BJ (cell line): ENCODE measurements at regions of chr5 and their contacts with region 1.

Region 1: GRCh38 chr5:115098041-115098702 is 71.5 kb downstream of the TRIM36 start:
- DNase-seq: peak; percentile 6
- H3K4me3 ChIP-seq: no peak overlapping the region
- H3K27me3 ChIP-seq: peaks cover 2% of the 10 kb centered on the region; the same call in 1 of the 2 replicates
- CTCF ChIP-seq: peak; percentile 75

Region 2: GRCh38 chr5:114782869-114783268 is 315.3 kb before region 1 on chr5:
- CTCF ChIA-PET with region 1: no interaction called
- POLR2A ChIA-PET with region 1: no interaction called
- DNase-seq: no peak
- H3K4me3 ChIP-seq: no peak overlapping the region
- H3K27me3 ChIP-seq: no peaks in the 10 kb centered on the region
- CTCF ChIP-seq: no peak

Region 3: GRCh38 chr5:115246361-115246991 is 148.3 kb after region 1 on chr5:
- CTCF ChIA-PET with region 1: interaction called, 12 read pairs
- POLR2A ChIA-PET with region 1: no interaction called
- DNase-seq: no peak
- H3K4me3 ChIP-seq: no peak overlapping the region
- H3K27me3 ChIP-seq: no peaks in the 10 kb centered on the region
- CTCF ChIP-seq: peak; percentile 66